ENCODE measurements at regions of chr4 and their contacts with region 1.

Region 1: GRCh38 chr4:73069338-73070073 is at the start of gene COX18:
- DNase-seq: peak; percentile 96
- ATAC-seq: peak; percentile 80
- H3K4me3 Mint-ChIP-seq: peak within 1 kb of the TSS; percentile 89
- H3K27ac Mint-ChIP-seq: peak within 1 kb of the TSS; percentile 97
- H3K4me1 Mint-ChIP-seq: peaks cover 37% of the 10 kb centered on the region
- H3K27me3 Mint-ChIP-seq: no peaks in the 10 kb centered on the region
- CTCF ChIP-seq: no peak
- total RNA-seq, gene COX18: 12.2 and 13.5 TPM in 2 replicates

Region 2: GRCh38 chr4:72112514-72113156 is 956.9 kb before region 1 on chr4:
- CTCF ChIA-PET with region 1: no interaction called
- POLR2A ChIA-PET with region 1: no interaction called
- intact Hi-C with region 1: loop called (anchors 5 kb)
- DNase-seq: no peak
- ATAC-seq: peak; percentile 73
- H3K4me3 Mint-ChIP-seq: no peak overlapping the region
- H3K27ac Mint-ChIP-seq: peak overlapping the region; percentile 70
- H3K4me1 Mint-ChIP-seq: peaks cover 6% of the 10 kb centered on the region
- H3K27me3 Mint-ChIP-seq: no peaks in the 10 kb centered on the region
- CTCF ChIP-seq: no peak

Region 3: GRCh38 chr4:73103799-73104503 is 34.4 kb after region 1 on chr4:
- CTCF ChIA-PET with region 1: no interaction called
- POLR2A ChIA-PET with region 1: no interaction called
- intact Hi-C with region 1: loop called (anchors 5 kb)
- DNase-seq: no peak
- ATAC-seq: no peak
- H3K4me3 Mint-ChIP-seq: no peak overlapping the region
- H3K27ac Mint-ChIP-seq: no peak overlapping the region
- H3K4me1 Mint-ChIP-seq: no peaks in the 10 kb centered on the region
- H3K27me3 Mint-ChIP-seq: no peaks in the 10 kb centered on the region
- CTCF ChIP-seq: no peak

Region 4: DNA sequence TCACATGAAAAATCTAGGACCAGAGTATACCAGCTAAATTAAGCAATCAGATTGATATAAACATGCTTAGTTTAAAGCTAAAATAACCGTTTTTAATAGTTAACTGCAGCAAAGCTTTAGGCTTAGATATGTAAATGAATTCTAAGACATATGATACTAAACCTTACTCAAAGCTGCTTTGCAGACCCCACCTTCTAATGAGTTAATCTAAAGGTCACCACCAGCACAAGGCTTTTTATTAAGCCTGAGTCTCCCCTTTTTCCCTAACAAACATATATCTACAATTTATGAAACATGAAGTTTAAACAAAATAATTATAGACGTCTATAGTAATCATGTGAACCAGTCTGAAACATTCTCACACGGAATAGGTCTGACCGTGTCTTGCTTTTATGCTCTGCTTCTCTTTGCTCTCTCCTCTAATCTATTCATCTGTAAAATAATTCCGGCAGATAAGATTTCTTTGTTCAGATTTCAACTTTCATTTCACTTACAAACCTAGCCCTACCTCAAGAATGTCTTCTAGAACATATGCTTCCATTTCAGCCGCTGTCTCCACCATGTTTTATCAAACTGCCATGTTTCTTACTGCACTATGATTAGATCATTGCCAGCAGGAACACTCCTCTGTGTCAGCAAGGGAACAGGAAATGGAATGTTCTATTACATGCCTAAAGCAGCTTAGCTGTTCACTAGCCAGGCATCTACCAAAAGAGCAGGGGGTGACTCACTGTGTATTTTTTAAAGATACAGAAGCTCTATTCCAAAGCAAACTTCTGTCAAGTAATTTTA is 153.2 kb after region 1 on chr4:
- CTCF ChIA-PET with region 1: no interaction called
- POLR2A ChIA-PET with region 1: interaction called, 3 read pairs
- intact Hi-C with region 1: loop called (anchors 1 kb)
- DNase-seq: no peak
- ATAC-seq: peak; percentile 98
- H3K4me3 Mint-ChIP-seq: no peak overlapping the region
- H3K27ac Mint-ChIP-seq: no peak overlapping the region
- H3K4me1 Mint-ChIP-seq: peaks cover 37% of the 10 kb centered on the region
- H3K27me3 Mint-ChIP-seq: no peaks in the 10 kb centered on the region
- CTCF ChIP-seq: no peak

Region 5: GRCh38 chr4:73593631-73594241 is 524.2 kb after region 1 on chr4:
- CTCF ChIA-PET with region 1: no interaction called
- POLR2A ChIA-PET with region 1: no interaction called
- intact Hi-C with region 1: loop called (anchors 1 kb)
- DNase-seq: no peak
- ATAC-seq: no peak
- H3K4me3 Mint-ChIP-seq: no peak overlapping the region
- H3K27ac Mint-ChIP-seq: no peak overlapping the region
- H3K4me1 Mint-ChIP-seq: peaks cover 34% of the 10 kb centered on the region
- H3K27me3 Mint-ChIP-seq: no peaks in the 10 kb centered on the region
- CTCF ChIP-seq: no peak

Region 6: DNA sequence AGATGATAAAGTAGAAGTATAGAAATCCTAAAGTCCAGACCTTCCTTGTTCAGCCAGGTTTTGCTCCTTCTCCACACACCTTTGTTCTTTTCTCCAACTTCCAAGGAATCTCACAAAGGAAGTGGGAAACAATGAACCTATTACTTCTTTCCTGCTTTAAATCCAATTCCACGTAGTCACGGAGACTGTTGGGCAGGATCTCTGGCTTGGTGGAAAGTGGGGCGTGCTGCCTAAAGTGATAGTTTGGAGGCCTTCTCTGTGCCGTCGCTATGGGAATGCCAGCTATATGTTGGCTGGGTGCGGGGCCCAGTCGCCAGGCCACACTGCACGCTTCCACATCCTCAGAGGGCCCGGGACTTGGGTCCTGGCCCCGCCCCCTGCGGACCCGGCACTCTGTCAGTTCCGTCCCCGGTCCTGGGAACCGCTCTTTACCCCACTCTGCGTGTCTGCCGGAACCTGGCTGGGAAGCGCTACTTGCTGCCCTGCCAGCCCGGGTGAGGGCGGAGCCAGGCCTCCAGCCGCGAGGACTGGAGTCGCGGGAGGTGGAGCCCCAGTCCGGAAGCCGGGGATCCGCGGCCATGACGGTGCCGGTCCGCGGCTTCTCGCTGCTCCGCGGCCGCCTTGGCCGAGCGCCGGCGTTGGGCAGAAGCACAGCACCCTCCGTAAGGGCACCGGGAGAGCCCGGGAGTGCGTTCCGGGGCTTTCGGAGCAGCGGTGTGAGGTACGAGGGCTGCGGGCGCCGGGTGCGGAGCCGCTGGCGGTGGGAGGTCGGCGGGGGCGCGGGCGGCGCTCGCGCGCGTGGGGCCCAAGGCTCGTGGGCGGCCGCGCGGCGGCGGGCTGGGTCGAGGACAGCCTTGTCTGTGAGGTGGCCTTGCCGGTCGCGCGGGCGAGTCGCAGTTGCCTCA is 1088.3 kb after region 1 on chr4 and contains the start of gene MTHFD2L:
- CTCF ChIA-PET with region 1: no interaction called
- POLR2A ChIA-PET with region 1: no interaction called
- intact Hi-C with region 1: loop called (anchors 5 kb)
- DNase-seq: peak; percentile 83
- ATAC-seq: peak; percentile 97
- H3K4me3 Mint-ChIP-seq: peak within 1 kb of the TSS; percentile 92
- H3K27ac Mint-ChIP-seq: peak within 1 kb of the TSS; percentile 80
- H3K4me1 Mint-ChIP-seq: peaks cover 18% of the 10 kb centered on the region
- H3K27me3 Mint-ChIP-seq: peaks cover 6% of the 10 kb centered on the region
- CTCF ChIP-seq: no peak
- total RNA-seq, gene MTHFD2L: 12.0 and 14.3 TPM in 2 replicates